ENCODE measurements at regions of chr6 and their contacts with region 1.

Region 1: DNA sequence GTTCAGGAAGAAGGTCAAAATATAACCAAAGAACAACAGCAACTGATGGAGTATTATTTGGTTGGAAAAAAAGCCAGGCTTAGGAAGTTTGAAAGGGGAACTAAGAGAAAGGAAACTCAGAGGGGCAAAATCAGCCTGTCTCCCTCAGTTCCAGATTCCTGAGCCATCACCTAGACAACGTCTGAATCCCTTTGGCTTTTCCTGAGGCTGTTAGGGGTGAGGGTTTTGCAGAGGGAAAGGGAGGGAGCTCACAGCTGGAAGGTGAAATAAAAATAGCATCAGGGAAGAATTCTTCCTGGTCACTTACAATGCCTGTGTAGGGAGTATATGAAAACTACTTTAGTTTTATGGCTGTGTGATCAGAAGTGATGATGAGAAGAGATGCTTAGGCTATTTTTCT is 100.5 kb downstream of the SOBP start:
- DNase-seq: no peak
- H3K4me3 ChIP-seq: no peak overlapping the region
- H3K27ac ChIP-seq: no peak overlapping the region
- H3K4me1 ChIP-seq: no peaks in the 10 kb centered on the region
- H3K27me3 ChIP-seq: no peaks in the 10 kb centered on the region
- CTCF ChIP-seq: no peak
- POLR2A ChIP-seq: no peak

Region 2: GRCh38 chr6:107330168-107330567 is 260.2 kb before region 1 on chr6:
- intact Hi-C with region 1: no loop called
- DNase-seq: no peak
- H3K4me3 ChIP-seq: no peak overlapping the region
- H3K27ac ChIP-seq: no peak overlapping the region
- H3K4me1 ChIP-seq: no peaks in the 10 kb centered on the region
- H3K27me3 ChIP-seq: no peaks in the 10 kb centered on the region
- CTCF ChIP-seq: no peak
- POLR2A ChIP-seq: no peak

Region 3: DNA sequence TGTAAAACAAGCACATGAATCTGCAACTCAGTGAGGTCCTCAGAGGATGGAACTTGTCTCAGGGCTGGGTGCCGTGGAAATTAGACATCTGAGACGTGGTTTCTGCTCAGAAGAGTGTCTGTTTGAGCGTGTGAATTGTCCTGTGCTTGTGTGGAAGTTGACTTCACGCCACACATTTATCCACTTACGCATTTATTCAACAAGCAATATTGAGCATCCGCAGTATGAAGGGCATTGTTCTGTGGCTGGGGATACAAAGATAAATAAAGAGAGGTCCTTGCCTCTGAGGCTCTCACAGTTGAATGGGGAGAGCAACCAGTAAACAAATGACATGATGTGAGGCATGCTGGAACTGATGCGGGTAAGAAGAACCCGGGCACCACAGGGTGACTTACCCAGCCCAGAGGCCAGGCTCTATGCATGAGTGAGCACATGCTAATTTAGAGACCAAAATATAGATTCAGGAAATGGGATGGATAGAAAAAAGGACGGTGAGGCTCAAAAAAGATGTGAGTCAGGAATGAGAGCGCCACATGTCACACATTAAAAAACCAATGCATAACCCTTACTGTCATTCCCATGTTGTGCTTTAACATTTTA is 40.0 kb before region 1 on chr6:
- intact Hi-C with region 1: no loop called
- DNase-seq: no peak
- H3K4me3 ChIP-seq: no peak overlapping the region
- H3K27ac ChIP-seq: no peak overlapping the region
- H3K4me1 ChIP-seq: no peaks in the 10 kb centered on the region
- H3K27me3 ChIP-seq: no peaks in the 10 kb centered on the region
- CTCF ChIP-seq: no peak
- POLR2A ChIP-seq: no peak

Region 4: DNA sequence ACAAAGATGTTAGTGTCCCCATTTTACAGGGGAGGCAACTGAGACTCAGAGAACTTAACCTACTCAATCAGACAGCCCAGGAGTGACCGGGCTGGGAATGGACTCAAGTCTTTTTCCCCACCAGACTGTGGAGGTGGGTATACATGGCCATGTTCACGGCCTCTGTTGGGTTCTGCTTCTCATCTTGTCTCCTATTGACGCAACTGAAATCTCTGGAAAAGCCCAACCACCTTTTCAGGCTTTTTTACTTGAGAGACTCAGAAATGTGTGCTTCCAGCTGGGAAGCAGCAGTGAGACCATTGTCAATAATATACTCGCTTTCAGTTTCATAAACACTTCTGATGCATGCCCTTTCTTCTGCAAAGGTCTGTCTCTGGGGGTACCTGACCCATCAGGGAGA is 29.7 kb before region 1 on chr6:
- intact Hi-C with region 1: loop called (anchors 1 kb)
- DNase-seq: no peak
- H3K4me3 ChIP-seq: peak overlapping the region in 1 of 3 donors; percentile 27
- H3K27ac ChIP-seq: peak overlapping the region; percentile 40 to 71
- H3K4me1 ChIP-seq: no peaks in the 10 kb centered on the region
- H3K27me3 ChIP-seq: no peaks in the 10 kb centered on the region
- CTCF ChIP-seq: no peak
- POLR2A ChIP-seq: no peak